Mammary epithelial cell (primary cell): ENCODE measurements at regions of chr19 and their contacts with region 1.

Region 1: DNA sequence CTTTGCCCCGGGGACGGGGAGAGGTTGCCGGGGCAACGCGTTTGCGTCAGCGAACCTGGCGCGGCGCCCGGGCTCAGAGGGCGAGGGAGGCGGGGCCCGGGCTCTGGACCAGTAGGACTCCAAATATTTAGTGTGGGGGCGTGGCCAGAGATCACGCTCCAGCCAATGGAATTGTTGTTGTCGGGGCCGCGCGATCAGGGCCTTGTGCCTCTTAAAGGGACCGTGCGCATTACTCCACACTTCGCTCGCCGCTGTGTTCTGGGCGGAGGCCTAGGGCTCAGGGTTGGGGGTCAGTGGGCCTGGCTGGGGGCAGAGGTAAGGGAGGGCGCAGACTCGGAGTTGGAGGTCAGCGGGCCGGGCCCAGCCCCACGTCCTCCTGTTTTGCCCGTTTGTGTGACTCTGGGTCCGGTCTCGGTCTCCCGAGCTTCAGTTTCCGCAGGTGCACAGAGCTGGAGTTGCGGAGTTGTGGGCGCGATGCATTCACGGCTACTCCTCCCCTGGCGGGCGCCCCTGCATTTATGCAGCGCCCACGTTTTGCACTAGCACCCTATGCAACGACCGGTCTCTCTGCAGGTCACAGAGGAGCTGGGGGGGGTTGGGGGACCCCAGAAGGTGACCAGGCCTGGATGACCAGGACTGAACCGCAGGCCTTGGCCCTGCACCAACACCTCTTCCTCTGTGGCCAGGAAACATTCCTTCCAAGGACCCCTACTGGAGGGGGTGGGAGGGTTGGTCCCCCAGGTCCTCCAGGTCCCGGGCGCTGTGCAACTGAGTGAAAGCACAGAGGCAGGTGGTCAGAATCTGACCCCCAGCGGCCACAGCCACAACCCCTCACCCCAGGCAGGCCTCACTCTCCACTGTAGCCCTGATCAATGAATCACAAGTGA is 10.7 kb upstream of the MKNK2 start:
- DNase-seq: peak; percentile 97
- H3K4me3 ChIP-seq: peak overlapping the region; percentile 54 to 70 (median 62)
- H3K27ac ChIP-seq: peak overlapping the region; percentile 88
- H3K4me1 ChIP-seq: peaks cover 59% of the 10 kb centered on the region
- H3K27me3 ChIP-seq: no peaks in the 10 kb centered on the region
- CTCF ChIP-seq: no peak

Region 2: GRCh38 chr19:1875646-1876495 is 185.9 kb before region 1 on chr19:
- CTCF ChIA-PET with region 1: no interaction called
- dilution Hi-C with region 1: loop called (anchors 5 kb)
- in situ Hi-C with region 1: no loop called
- intact Hi-C with region 1: no loop called
- DNase-seq: peak; percentile 86
- H3K4me3 ChIP-seq: peak overlapping the region; percentile 76 to 100 (median 88)
- H3K27ac ChIP-seq: peak overlapping the region; percentile 73
- H3K4me1 ChIP-seq: peaks cover 28% of the 10 kb centered on the region
- H3K27me3 ChIP-seq: no peaks in the 10 kb centered on the region
- CTCF ChIP-seq: no peak

Region 3: DNA sequence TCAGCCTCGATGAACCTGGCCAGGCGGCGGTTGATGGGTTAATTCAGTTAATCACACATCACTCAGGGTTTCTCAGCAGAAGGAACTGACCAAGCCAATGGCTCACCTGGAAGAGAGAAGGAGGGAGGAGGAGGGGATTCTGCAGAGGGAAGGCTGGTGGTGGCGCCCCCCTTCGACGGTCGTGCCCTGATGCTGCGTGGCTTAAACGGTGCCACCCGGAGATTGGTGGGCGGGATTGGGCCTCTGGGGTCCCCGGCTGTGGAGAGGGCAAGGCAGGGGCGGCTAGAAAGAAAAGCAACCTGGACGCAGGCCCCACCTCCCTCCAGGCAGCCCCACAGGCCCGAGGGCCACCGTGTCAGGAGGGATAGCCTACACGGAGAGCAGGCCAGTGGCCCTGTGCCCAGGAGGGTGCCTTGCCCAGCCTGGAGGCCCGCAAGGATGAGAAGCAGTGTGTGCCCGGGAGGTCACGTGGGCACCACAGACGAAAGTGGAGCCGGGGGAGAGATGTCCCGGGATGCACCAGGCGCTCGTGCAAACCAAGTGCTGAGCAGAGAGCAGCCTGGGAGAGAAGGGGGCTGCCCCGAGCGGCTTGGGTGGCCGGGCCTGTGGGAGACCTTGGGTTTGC is 104.8 kb before region 1 on chr19:
- CTCF ChIA-PET with region 1: no interaction called
- dilution Hi-C with region 1: no loop called
- in situ Hi-C with region 1: no loop called
- intact Hi-C with region 1: no loop called
- DNase-seq: no peak
- H3K4me3 ChIP-seq: no peak overlapping the region
- H3K27ac ChIP-seq: no peak overlapping the region
- H3K4me1 ChIP-seq: no peaks in the 10 kb centered on the region
- H3K27me3 ChIP-seq: no peaks in the 10 kb centered on the region
- CTCF ChIP-seq: no peak

Region 4: DNA sequence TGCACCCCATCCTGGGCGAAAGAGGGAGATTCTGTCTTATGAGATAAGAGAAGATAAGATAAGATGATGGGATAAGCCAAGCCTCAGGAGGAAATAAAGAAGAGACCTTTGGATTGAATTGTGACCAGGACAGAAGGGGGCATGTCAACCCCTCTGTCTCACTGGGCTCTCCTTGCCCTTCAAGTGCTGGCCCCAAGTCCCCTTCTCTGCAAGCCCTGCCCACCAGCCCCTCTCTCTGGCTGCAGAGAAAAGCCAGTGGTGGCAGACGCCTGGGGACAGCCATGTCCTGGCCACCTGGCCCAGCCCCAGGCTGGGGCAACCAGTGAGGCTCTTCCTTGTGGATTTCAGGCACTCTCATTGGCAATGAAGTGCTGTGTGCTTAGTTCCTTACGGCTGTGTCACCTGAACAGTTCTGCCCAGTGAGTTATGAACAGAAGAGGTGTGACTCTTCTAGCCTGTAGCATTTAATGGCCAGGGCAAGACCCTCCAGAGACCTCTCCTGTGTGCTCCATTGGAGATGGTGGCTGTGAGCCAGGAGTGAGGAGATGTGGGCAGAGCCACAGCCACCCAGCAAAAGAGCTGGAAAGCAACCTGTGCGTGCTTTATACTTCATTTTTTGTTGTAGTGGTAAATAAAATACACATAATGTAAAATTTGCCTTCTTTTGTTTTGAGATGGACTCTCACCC is 40.1 kb before region 1 on chr19:
- CTCF ChIA-PET with region 1: no interaction called
- dilution Hi-C with region 1: no loop called
- in situ Hi-C with region 1: loop called in 1 of 2 experiments (anchors 5 kb)
- intact Hi-C with region 1: no loop called
- DNase-seq: no peak
- H3K4me3 ChIP-seq: no peak overlapping the region
- H3K27ac ChIP-seq: no peak overlapping the region
- H3K4me1 ChIP-seq: no peaks in the 10 kb centered on the region
- H3K27me3 ChIP-seq: no peaks in the 10 kb centered on the region
- CTCF ChIP-seq: no peak

Region 5: GRCh38 chr19:2089001-2089711 is 27.4 kb after region 1 on chr19:
- CTCF ChIA-PET with region 1: no interaction called
- dilution Hi-C with region 1: no loop called
- in situ Hi-C with region 1: no loop called
- intact Hi-C with region 1: loop called (anchors 1 kb)
- DNase-seq: peak; percentile 93
- H3K4me3 ChIP-seq: peak overlapping the region in 1 of 3 experiments; percentile 0
- H3K27ac ChIP-seq: peak overlapping the region; percentile 87
- H3K4me1 ChIP-seq: peaks cover 78% of the 10 kb centered on the region
- H3K27me3 ChIP-seq: no peaks in the 10 kb centered on the region
- CTCF ChIP-seq: peak; percentile 15 to 38

Region 6: GRCh38 chr19:2132731-2133490 is 71.2 kb after region 1 on chr19:
- CTCF ChIA-PET with region 1: no interaction called
- dilution Hi-C with region 1: loop called (anchors 5 kb)
- in situ Hi-C with region 1: no loop called
- intact Hi-C with region 1: no loop called
- DNase-seq: no peak
- H3K4me3 ChIP-seq: no peak overlapping the region
- H3K27ac ChIP-seq: no peak overlapping the region
- H3K4me1 ChIP-seq: no peaks in the 10 kb centered on the region
- H3K27me3 ChIP-seq: no peaks in the 10 kb centered on the region
- CTCF ChIP-seq: no peak